Activated CD4-positive, alpha-beta memory T cell treated with anti-CD3 and anti-CD28 coated beads, Interleukin-2, amount 10 ng/mL, durations not matched to agents 7 days and 5 days (primary cell): ENCODE measurements at regions of chr2 and their contacts with region 1.

Region 1: GRCh38 chr2:8472545-8473323 is 209.1 kb upstream of the ID2 start:
- DNase-seq: peak; percentile 57
- H3K4me3 Mint-ChIP-seq: peak overlapping the region; percentile 11
- H3K27ac Mint-ChIP-seq: peak overlapping the region; percentile 92
- H3K4me1 Mint-ChIP-seq: peaks cover 84% of the 10 kb centered on the region
- H3K27me3 Mint-ChIP-seq: no peaks in the 10 kb centered on the region

Region 2: DNA sequence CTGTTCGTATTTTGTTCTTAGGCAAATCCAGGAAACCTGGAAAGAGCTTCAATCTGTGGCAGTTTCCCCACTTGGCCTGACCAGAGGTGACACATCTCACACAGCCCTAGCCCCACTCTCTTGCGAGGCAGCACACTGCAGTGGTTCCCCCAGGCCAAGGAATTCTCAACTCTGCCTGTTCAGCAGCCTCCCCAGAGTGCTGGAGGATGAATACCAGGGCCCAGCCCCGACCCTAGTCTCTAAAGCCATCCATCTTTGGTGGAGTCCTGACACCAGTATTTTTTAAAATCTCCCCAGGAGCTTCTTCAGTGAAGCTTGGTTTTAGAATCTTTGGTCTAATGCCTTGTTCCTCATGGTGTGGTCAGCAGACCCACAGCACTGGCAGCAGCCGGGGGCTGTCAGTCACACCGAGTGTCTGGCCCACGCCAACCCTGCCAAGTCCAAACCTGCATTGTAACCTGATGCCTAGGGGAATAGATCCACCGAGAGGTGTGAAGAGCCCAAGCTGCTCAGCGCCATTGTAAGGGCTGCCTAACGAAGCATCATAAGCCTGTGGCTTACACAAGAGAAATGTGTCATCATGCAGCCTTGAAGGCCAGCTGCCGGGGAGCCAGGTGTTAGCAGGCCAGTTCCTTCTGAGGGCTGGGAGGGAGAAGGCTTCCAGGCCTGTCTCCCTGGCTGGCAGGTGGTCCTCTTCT is 219.6 kb before region 1 on chr2:
- CTCF ChIA-PET with region 1: no interaction called
- POLR2A ChIA-PET with region 1: no interaction called
- DNase-seq: no peak
- H3K4me3 Mint-ChIP-seq: no peak overlapping the region
- H3K27ac Mint-ChIP-seq: no peak overlapping the region
- H3K4me1 Mint-ChIP-seq: peaks cover 2% of the 10 kb centered on the region
- H3K27me3 Mint-ChIP-seq: no peaks in the 10 kb centered on the region

Region 3: DNA sequence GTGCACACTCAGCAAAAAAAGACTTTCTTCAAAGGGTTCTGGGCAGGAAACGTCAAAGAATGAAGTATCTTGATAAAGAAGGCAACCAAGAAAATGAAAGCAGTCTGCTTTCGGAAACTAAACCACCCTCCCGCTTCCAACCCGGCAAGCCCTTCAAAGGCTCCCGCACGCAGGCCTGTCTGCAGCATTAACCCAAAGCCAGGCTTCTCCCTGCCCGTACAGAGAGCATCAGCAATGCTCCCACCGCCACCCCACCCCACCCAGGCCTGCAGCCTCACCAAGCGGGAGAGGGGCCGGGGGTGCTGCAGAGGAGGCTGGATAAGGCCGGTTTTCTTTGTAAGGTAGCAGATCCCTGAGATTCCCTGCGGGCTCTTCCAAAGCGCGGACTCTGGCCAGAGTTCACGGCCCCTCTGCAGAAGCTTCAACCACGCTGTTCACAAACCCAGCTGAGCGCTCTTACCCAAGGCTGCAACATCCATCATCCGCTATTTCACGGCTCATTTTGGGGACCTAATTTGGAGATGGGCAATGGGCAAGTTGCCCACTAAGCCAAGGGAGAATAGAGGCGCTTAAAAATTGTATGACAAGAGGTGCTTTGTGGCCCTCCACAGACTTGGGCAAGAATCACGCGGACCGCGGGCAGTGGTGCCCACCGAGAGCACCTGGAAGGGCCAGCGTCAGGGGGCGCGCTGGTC is 16.4 kb before region 1 on chr2:
- CTCF ChIA-PET with region 1: interaction called, 6 read pairs
- POLR2A ChIA-PET with region 1: interaction called, 23 read pairs
- DNase-seq: peak; percentile 71
- H3K4me3 Mint-ChIP-seq: peak overlapping the region; percentile 82
- H3K27ac Mint-ChIP-seq: peak overlapping the region; percentile 98
- H3K4me1 Mint-ChIP-seq: peaks cover 64% of the 10 kb centered on the region
- H3K27me3 Mint-ChIP-seq: no peaks in the 10 kb centered on the region